ENCODE measurements at regions of chr17 and their contacts with region 1.

Region 1: DNA sequence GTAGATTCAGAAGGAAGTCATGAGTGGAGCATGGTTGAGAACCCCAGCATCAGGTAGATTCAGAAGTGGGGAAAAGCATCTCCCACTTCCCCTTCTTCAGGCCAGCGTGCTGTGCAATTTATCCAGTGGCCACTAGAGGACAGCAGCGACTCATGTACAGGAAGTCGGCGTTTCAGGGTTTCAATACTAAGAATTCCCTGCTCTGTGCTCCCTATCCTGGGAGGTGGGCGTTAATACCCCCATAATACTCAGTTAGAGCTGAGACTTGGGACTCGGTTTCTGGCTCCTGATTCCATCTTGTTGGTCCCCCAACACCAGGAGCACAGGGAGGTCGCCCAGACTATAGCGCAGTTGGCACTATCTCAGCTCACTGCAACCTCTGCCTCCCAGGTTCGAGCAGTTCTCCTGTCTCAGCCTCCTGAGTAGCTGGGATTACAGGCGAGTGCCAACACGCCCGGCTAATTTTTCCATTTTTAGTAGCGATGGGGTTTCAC is 75.3 kb upstream of the AMZ2 start:
- DNase-seq: peak; percentile 67
- H3K4me3 Mint-ChIP-seq: no peak overlapping the region
- H3K27ac Mint-ChIP-seq: no peak overlapping the region
- H3K4me1 Mint-ChIP-seq: no peaks in the 10 kb centered on the region
- H3K27me3 Mint-ChIP-seq: no peaks in the 10 kb centered on the region
- CTCF ChIP-seq: peak; percentile 98

Region 2: DNA sequence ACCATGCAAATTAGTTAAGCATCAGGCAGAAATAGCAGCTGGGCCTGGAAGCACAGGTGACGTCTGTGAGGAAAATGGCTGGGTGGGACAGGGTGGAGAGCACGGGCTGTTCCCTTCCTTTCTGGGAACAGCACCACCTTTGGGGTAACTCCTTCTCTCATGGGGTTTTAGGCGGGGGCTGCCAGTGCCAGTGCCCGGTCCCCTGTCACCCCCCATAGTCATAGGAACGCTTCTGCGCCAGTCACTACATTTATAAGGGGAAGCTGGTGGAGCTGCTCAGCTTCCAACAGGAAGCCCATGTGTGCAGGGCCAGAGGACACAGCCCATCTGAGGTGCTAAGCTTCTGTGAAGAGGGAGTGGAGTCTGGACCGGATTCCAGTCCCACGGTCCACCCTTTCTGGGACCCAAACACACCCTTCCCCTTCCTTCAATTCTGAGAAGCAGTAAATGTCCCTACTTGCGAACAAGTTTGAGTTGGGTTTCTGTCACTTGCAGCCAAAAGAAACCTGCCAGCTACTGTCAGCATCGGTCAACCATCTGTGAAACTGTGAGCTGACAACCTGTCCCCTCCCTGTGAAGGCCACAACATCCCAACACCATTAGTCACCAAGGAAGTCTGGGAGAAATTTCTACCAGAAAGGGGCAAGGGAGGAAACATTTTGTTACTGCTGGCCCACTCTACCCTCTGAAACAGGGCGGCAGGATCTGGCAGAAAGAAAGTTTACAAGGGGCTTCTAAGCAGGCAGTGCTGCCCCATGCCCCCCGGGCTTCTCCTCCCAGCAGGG is 10.7 kb before region 1 on chr17:
- CTCF ChIA-PET with region 1: interaction called, 14 read pairs
- POLR2A ChIA-PET with region 1: interaction called, 3 read pairs
- intact Hi-C with region 1: no loop called
- DNase-seq: no peak
- H3K4me3 Mint-ChIP-seq: no peak overlapping the region
- H3K27ac Mint-ChIP-seq: no peak overlapping the region
- H3K4me1 Mint-ChIP-seq: no peaks in the 10 kb centered on the region
- H3K27me3 Mint-ChIP-seq: no peaks in the 10 kb centered on the region
- CTCF ChIP-seq: no peak

Region 3: GRCh38 chr17:68184816-68185436 is 12.4 kb after region 1 on chr17:
- CTCF ChIA-PET with region 1: interaction called, 14 read pairs
- POLR2A ChIA-PET with region 1: no interaction called
- intact Hi-C with region 1: no loop called
- DNase-seq: no peak
- H3K4me3 Mint-ChIP-seq: no peak overlapping the region
- H3K27ac Mint-ChIP-seq: no peak overlapping the region
- H3K4me1 Mint-ChIP-seq: peaks cover 7% of the 10 kb centered on the region
- H3K27me3 Mint-ChIP-seq: no peaks in the 10 kb centered on the region
- CTCF ChIP-seq: no peak

Region 4: GRCh38 chr17:68205251-68205807 is 32.8 kb after region 1 on chr17:
- CTCF ChIA-PET with region 1: interaction called, 40 read pairs
- POLR2A ChIA-PET with region 1: no interaction called
- intact Hi-C with region 1: loop called (anchors 1 kb)
- DNase-seq: peak; percentile 86
- H3K4me3 Mint-ChIP-seq: peak overlapping the region; percentile 77
- H3K27ac Mint-ChIP-seq: no peak overlapping the region
- H3K4me1 Mint-ChIP-seq: peaks cover 9% of the 10 kb centered on the region
- H3K27me3 Mint-ChIP-seq: peaks cover 4% of the 10 kb centered on the region
- CTCF ChIP-seq: peak; percentile 85

Region 5: GRCh38 chr17:68435876-68436842 is 263.7 kb after region 1 on chr17:
- CTCF ChIA-PET with region 1: interaction called, 4 read pairs
- POLR2A ChIA-PET with region 1: no interaction called
- intact Hi-C with region 1: loop called (anchors 1 kb)
- DNase-seq: peak; percentile 86
- H3K4me3 Mint-ChIP-seq: no peak overlapping the region
- H3K27ac Mint-ChIP-seq: no peak overlapping the region
- H3K4me1 Mint-ChIP-seq: peaks cover 9% of the 10 kb centered on the region
- H3K27me3 Mint-ChIP-seq: no peaks in the 10 kb centered on the region
- CTCF ChIP-seq: peak; percentile 82